ENCODE measurements at regions of chr5 and their contacts with region 1.

Region 1: GRCh38 chr5:156722358-156722757 is 127.7 kb upstream of the PPP1R2B start:
- DNase-seq: peak; percentile 29
- ATAC-seq: peak; percentile 35; the same call in 1 of the 2 replicates
- H3K4me3 ChIP-seq: no peak overlapping the region
- H3K27ac ChIP-seq: no peak overlapping the region
- H3K4me1 ChIP-seq: no peaks in the 10 kb centered on the region
- H3K27me3 ChIP-seq: no peaks in the 10 kb centered on the region
- CTCF ChIP-seq: no peak
- POLR2A ChIP-seq: no peak
- RAD21 ChIP-seq: no peak

Region 2: GRCh38 chr5:155239803-155240202 is 1482.6 kb before region 1 on chr5:
- CTCF ChIA-PET with region 1: no interaction called
- POLR2A ChIA-PET with region 1: no interaction called
- dilution Hi-C with region 1: no loop called
- in situ Hi-C with region 1: no loop called
- intact Hi-C with region 1: loop called (anchors 5 kb)
- DNase-seq: no peak
- ATAC-seq: no peak
- H3K4me3 ChIP-seq: no peak overlapping the region
- H3K27ac ChIP-seq: no peak overlapping the region
- H3K4me1 ChIP-seq: no peaks in the 10 kb centered on the region
- H3K27me3 ChIP-seq: no peaks in the 10 kb centered on the region
- CTCF ChIP-seq: no peak
- POLR2A ChIP-seq: no peak
- RAD21 ChIP-seq: no peak

Region 3: GRCh38 chr5:157004893-157005551 is 282.7 kb after region 1 on chr5:
- CTCF ChIA-PET with region 1: no interaction called
- POLR2A ChIA-PET with region 1: no interaction called
- dilution Hi-C with region 1: no loop called
- in situ Hi-C with region 1: no loop called
- intact Hi-C with region 1: no loop called
- DNase-seq: no peak
- ATAC-seq: no peak
- H3K4me3 ChIP-seq: no peak overlapping the region
- H3K27ac ChIP-seq: no peak overlapping the region
- H3K4me1 ChIP-seq: no peaks in the 10 kb centered on the region
- H3K27me3 ChIP-seq: no peaks in the 10 kb centered on the region
- CTCF ChIP-seq: no peak
- POLR2A ChIP-seq: no peak
- RAD21 ChIP-seq: no peak